ENCODE measurements at regions of chr7 and their contacts with region 1.

Region 1: GRCh38 chr7:27160546-27161213 is 4.2 kb upstream of the HOXA7 start:
- DNase-seq: peak; percentile 92
- H3K4me3 ChIP-seq: peak overlapping the region in 2 of 3 experiments; percentile 44 to 63
- H3K27ac ChIP-seq: peak overlapping the region; percentile 69
- H3K4me1 ChIP-seq: peaks cover 42% of the 10 kb centered on the region
- H3K27me3 ChIP-seq: no peaks in the 10 kb centered on the region
- CTCF ChIP-seq: peak; percentile 95
- POLR2A ChIP-seq: no peak

Region 2: GRCh38 chr7:25857376-25857921 is 1303.2 kb before region 1 on chr7:
- CTCF ChIA-PET with region 1: interaction called, 6 read pairs
- POLR2A ChIA-PET with region 1: no interaction called
- dilution Hi-C with region 1: no loop called
- intact Hi-C with region 1: loop called (anchors 2 kb)
- DNase-seq: no peak
- H3K4me3 ChIP-seq: peak overlapping the region in 2 of 3 experiments; percentile 28
- H3K27ac ChIP-seq: peak overlapping the region; percentile 31
- H3K4me1 ChIP-seq: peaks cover 18% of the 10 kb centered on the region
- H3K27me3 ChIP-seq: peaks cover 46 to 47% of the 10 kb centered on the region in 2 experiments
- CTCF ChIP-seq: no peak
- POLR2A ChIP-seq: no peak

Region 3: GRCh38 chr7:26151953-26152781 is 1008.5 kb before region 1 on chr7 and contains the start of gene NFE2L3:
- CTCF ChIA-PET with region 1: no interaction called
- POLR2A ChIA-PET with region 1: interaction called, 3 read pairs
- dilution Hi-C with region 1: no loop called
- intact Hi-C with region 1: loop called (anchors 5 kb)
- DNase-seq: peak; percentile 77
- H3K4me3 ChIP-seq: peak within 1 kb of the TSS; percentile 42 to 71 (median 68)
- H3K27ac ChIP-seq: peak within 1 kb of the TSS; percentile 92
- H3K4me1 ChIP-seq: peaks cover 45% of the 10 kb centered on the region
- H3K27me3 ChIP-seq: peaks cover 0 to 4% of the 10 kb centered on the region in 2 experiments
- CTCF ChIP-seq: peak in 1 of 2 donors; percentile 7
- POLR2A ChIP-seq: peak; percentile 46
- total RNA-seq, gene NFE2L3: 28.4 and 40.2 TPM in 2 replicates

Region 4: DNA sequence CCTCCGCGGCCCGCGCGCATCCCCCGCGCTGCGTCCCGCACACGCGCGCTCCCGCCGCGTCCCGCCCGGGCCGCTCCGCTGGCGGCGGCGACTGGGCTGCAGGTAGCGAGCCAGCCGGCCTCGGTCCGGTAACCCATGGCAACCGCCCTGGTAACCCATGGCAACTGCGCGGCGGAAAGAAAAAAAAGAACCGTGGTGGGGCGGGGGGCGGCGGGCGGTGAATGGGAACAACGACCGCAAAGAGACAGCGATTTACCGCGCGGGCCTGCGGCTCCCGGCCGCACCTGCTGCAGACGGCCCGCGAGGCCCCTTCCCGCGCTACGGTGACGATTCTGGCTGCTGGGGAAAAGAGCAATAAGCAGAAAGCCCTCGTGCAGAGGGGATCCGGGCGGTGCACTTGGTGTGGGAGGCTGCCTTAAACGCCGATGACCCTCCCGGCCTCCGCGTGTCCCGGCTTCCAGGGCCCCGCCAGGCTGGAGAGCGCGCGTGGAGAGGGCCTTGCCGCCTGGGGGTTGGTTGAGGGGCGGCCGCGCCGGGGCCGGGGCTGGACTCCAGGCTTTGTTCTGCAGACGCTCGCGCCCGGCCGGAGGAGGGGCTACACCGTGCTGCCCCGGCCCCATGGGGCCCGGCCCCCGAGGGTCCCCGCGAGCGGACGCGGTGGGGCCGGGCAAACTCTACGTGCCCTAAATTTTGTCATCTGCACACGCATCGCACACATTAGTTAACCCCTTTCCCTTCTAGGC is 784.3 kb before region 1 on chr7:
- CTCF ChIA-PET with region 1: interaction called, 18 read pairs
- POLR2A ChIA-PET with region 1: interaction called, 3 read pairs
- dilution Hi-C with region 1: loop called (anchors 10 kb)
- intact Hi-C with region 1: no loop called
- DNase-seq: peak; percentile 74
- H3K4me3 ChIP-seq: peak overlapping the region; percentile 70 to 91 (median 76)
- H3K27ac ChIP-seq: peak overlapping the region; percentile 80
- H3K4me1 ChIP-seq: peaks cover 36% of the 10 kb centered on the region
- H3K27me3 ChIP-seq: no peaks in the 10 kb centered on the region
- CTCF ChIP-seq: no peak
- POLR2A ChIP-seq: peak; percentile 51

Region 5: GRCh38 chr7:26667500-26668133 is 493.1 kb before region 1 on chr7:
- CTCF ChIA-PET with region 1: interaction called, 27 read pairs
- POLR2A ChIA-PET with region 1: no interaction called
- dilution Hi-C with region 1: no loop called
- intact Hi-C with region 1: loop called (anchors 1 kb)
- DNase-seq: peak; percentile 96
- H3K4me3 ChIP-seq: no peak overlapping the region
- H3K27ac ChIP-seq: no peak overlapping the region
- H3K4me1 ChIP-seq: peaks cover 3% of the 10 kb centered on the region
- H3K27me3 ChIP-seq: no peaks in the 10 kb centered on the region
- CTCF ChIP-seq: peak; percentile 80 to 91
- POLR2A ChIP-seq: no peak

Region 6: GRCh38 chr7:26853788-26854393 is 306.8 kb before region 1 on chr7:
- CTCF ChIA-PET with region 1: interaction called, 18 read pairs
- POLR2A ChIA-PET with region 1: no interaction called
- dilution Hi-C with region 1: loop called (anchors 10 kb)
- intact Hi-C with region 1: no loop called
- DNase-seq: peak; percentile 69
- H3K4me3 ChIP-seq: no peak overlapping the region
- H3K27ac ChIP-seq: no peak overlapping the region
- H3K4me1 ChIP-seq: peaks cover 34% of the 10 kb centered on the region
- H3K27me3 ChIP-seq: no peaks in the 10 kb centered on the region
- CTCF ChIP-seq: peak; percentile 24 to 26
- POLR2A ChIP-seq: no peak

Region 7: GRCh38 chr7:27010068-27010467 is 150.6 kb before region 1 on chr7:
- CTCF ChIA-PET with region 1: no interaction called
- POLR2A ChIA-PET with region 1: no interaction called
- dilution Hi-C with region 1: no loop called
- intact Hi-C with region 1: no loop called
- DNase-seq: no peak
- H3K4me3 ChIP-seq: no peak overlapping the region
- H3K27ac ChIP-seq: no peak overlapping the region
- H3K4me1 ChIP-seq: no peaks in the 10 kb centered on the region
- H3K27me3 ChIP-seq: no peaks in the 10 kb centered on the region
- CTCF ChIP-seq: no peak
- POLR2A ChIP-seq: no peak

Region 8: DNA sequence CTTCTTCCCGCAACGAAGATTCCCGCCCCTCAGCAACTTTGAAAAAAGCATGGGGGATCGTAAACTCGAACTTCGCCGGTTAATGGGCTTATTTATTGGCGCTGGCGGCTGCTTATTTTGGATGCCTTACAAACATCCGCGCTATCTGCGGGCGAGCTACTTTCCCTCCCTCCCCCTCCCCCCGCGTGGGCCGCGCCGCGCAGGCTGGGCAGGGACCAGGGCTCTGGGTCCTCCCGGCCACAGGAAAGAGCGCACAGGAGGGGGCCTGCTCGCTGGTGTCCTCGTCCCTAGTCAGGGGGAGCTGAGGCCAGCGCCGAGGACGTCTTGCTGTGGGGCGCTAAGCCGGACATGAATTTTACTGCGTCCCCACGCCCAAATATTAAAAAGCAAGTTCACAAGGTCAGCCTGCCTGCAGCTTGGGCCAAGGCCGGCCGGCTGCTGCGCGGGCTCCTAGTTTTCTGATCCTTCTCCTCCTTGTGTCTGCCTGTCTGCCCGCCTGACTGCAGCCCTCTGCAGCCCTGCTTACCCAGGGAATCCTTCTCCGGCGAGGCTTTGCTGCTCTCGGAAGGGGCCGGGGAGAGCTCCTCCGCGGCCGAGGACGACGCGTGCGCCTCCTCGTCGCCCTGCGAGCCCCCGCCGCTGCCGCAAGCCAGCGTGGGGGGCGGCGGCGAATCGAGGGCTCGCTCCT is 12.3 kb after region 1 on chr7:
- CTCF ChIA-PET with region 1: interaction called, 81 read pairs
- POLR2A ChIA-PET with region 1: interaction called, 7 read pairs
- dilution Hi-C with region 1: no loop called
- intact Hi-C with region 1: loop called (anchors 1 kb)
- DNase-seq: peak; percentile 64
- H3K4me3 ChIP-seq: peak overlapping the region; percentile 35 to 88 (median 59)
- H3K27ac ChIP-seq: peak overlapping the region; percentile 96
- H3K4me1 ChIP-seq: peaks cover 57% of the 10 kb centered on the region
- H3K27me3 ChIP-seq: no peaks in the 10 kb centered on the region
- CTCF ChIP-seq: no peak
- POLR2A ChIP-seq: no peak

Region 9: DNA sequence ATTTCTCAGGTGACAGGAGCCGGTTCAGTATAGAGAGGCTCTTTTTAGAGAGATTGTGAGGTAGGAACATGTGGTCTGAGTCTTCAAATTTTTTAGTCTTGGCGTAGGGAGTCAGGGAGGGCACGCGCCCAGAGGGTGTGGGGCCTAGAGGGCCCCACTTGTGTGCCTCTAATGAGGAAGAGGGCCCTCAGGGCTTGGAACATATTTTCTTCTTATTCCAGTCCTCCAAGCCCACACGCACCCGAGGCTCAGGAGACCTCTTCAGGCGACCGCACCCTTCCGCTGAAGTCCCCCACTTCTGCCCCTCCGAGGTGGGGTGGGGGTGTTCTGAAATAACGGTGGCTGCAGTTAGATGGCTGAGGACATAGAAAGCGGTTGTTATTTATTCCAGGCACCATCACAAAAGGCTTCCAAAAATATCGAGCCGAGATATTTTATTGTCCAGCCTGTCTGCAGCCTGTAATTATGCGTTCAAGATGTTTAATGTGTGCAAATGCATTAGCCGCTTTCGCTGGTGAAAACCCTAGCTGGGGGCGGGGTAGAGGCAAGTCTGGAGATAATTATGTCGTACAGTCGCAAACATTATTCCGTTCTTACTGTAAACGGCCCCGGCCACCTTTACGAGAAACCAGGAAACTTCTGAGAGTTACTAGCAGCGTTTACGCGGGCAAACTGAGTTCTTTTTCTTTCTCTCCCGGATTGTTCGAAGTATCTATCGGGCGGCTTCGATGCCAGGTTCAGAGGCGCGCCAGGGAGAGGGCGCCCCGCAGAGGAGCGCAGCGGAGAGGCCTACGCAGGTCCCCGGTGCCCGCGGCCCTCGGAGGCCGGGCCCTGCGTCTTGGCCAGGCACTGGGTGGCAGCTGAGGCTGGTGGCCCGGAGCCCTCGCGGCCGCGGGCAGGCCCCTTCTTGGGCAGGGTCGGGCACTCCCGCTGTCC is 52.1 kb after region 1 on chr7:
- CTCF ChIA-PET with region 1: no interaction called
- POLR2A ChIA-PET with region 1: no interaction called
- dilution Hi-C with region 1: no loop called
- intact Hi-C with region 1: no loop called
- DNase-seq: no peak
- H3K4me3 ChIP-seq: peak overlapping the region in 1 of 3 experiments; percentile 5
- H3K27ac ChIP-seq: no peak overlapping the region
- H3K4me1 ChIP-seq: peaks cover 12% of the 10 kb centered on the region
- H3K27me3 ChIP-seq: peaks cover 70 to 72% of the 10 kb centered on the region in 2 experiments
- CTCF ChIP-seq: peak in 1 of 2 donors; percentile 28
- POLR2A ChIP-seq: no peak